ENCODE measurements at regions of chr16 and their contacts with region 1.

Region 1: DNA sequence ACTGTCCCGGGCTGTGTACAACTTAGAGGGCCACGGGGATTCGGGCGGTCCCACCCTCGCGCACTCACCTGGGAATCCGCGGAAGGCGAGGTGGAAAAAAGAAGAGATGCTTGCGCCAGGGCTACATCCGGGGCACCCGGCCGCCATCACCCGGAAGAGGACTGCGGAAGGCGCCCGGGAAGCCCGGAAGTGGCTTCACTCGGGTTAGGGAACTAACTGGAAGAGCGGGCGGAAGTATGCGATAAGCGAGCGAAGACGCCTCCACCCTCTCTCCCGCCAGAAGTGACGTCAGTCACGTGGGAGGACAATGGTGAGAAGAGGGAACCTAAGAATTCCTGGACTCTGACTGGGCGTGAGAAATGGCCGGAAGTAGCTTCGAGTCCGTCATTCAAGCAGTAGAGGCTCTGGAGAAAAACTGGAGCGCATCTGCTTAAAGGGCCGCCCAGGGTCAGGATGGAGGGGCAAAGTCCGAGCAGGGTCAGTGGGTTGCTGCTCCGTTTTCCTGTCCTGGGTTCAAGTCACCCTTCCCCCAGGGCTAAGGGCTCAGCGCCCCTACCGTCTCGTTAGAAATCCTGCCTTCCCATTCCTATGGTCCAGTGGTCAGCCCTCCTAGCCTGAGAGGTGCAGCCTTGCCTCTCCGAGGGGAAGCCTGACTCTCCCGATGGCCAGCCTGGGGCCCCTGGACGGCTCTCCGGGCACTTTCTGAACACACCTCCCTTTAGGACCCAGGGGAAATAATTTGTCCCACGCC is at the start of gene CD2BP2:
- DNase-seq: peak; percentile 88
- ATAC-seq: peak; percentile 83
- H3K4me3 Mint-ChIP-seq: peak within 1 kb of the TSS; percentile 95
- H3K27ac Mint-ChIP-seq: peak within 1 kb of the TSS; percentile 89
- H3K4me1 Mint-ChIP-seq: peaks cover 63% of the 10 kb centered on the region
- H3K27me3 Mint-ChIP-seq: no peaks in the 10 kb centered on the region
- total RNA-seq, gene CD2BP2: 62.7 to 67.5 TPM

Region 2: GRCh38 chr16:30122604-30123160 is 232.6 kb before region 1 on chr16:
- CTCF ChIA-PET with region 1: no interaction called
- POLR2A ChIA-PET with region 1: no interaction called
- DNase-seq: peak; percentile 37
- ATAC-seq: peak; percentile 40
- H3K4me3 Mint-ChIP-seq: peak overlapping the region; percentile 86
- H3K27ac Mint-ChIP-seq: peak overlapping the region; percentile 83
- H3K4me1 Mint-ChIP-seq: peaks cover 36% of the 10 kb centered on the region
- H3K27me3 Mint-ChIP-seq: no peaks in the 10 kb centered on the region

Region 3: GRCh38 chr16:30370444-30371247 is 15.3 kb after region 1 on chr16 and contains the start of gene TBC1D10B:
- CTCF ChIA-PET with region 1: interaction called, 14 read pairs
- POLR2A ChIA-PET with region 1: interaction called, 7 read pairs
- DNase-seq: peak; percentile 100
- ATAC-seq: peak; percentile 87
- H3K4me3 Mint-ChIP-seq: peak within 1 kb of the TSS; percentile 95
- H3K27ac Mint-ChIP-seq: peak within 1 kb of the TSS; percentile 92
- H3K4me1 Mint-ChIP-seq: peaks cover 45% of the 10 kb centered on the region
- H3K27me3 Mint-ChIP-seq: no peaks in the 10 kb centered on the region
- total RNA-seq, gene TBC1D10B: 75.4 to 75.7 TPM